Activated CD4-positive, alpha-beta T cell treated with anti-CD3 and anti-CD28 coated beads for 36 hours (primary cell): ENCODE measurements at regions of chr1 and their contacts with region 1.

Region 1: DNA sequence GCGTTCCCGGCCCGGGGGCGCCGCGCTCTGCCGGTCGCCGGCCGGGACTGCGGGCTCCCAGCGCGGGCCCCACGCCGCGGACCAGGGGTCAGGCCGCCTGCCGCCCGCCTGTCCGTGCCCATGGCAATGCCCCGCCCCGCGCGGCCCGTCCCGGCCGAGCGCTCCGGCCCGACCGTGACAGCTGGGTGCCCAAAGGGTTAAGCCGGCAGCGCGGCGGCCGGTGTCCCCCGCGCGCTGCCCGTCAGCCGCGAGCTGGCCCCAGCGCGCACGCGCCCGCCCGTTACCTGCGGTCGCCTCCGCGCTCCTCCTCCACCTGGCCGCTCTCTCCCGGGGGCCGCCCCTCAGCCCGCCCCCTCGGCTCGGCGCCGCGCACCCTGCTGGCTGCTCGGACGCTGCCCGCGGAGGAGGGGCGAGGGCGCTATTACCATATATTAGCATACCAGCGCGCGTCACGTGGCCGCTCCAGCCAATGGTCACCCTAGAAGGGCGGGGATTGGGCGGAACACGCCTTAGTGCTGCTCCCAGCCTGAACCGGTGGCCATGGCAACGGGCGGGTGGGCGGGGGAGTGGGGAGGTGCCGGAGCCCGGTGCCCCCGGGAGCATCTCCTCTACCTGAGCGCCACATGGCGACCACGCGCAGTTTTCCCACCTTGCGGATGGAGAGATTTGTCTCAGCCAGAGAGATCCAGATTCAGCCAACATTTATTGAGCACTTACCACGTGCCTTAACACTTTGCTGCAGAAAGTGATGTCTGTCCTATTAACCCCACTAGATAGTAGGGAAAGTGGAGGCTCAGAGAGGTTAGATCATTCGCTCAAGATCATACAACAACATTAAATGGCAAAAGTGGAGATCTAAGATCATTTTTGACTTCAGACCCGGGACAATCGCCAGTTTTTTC is at the start of gene PHC2:
- DNase-seq: peak; percentile 95
- ATAC-seq: peak; percentile 99
- H3K4me3 Mint-ChIP-seq: peak within 1 kb of the TSS; percentile 58
- H3K27ac Mint-ChIP-seq: no peak within 1 kb of the TSS
- H3K4me1 Mint-ChIP-seq: peaks cover 5% of the 10 kb centered on the region
- H3K27me3 Mint-ChIP-seq: peaks cover 5% of the 10 kb centered on the region
- total RNA-seq, gene PHC2: 23.8 to 28.4 TPM

Region 2: GRCh38 chr1:33181921-33182341 is 249.0 kb before region 1 on chr1 and contains the start of gene TRIM62:
- CTCF ChIA-PET with region 1: no interaction called
- POLR2A ChIA-PET with region 1: no interaction called
- intact Hi-C with region 1: loop called in 1 of 2 experiments (anchors 1 kb)
- DNase-seq: peak; percentile 84
- ATAC-seq: peak; percentile 35
- H3K4me3 Mint-ChIP-seq: peak within 1 kb of the TSS; percentile 79
- H3K27ac Mint-ChIP-seq: peak within 1 kb of the TSS; percentile 74
- H3K4me1 Mint-ChIP-seq: peaks cover 25% of the 10 kb centered on the region
- H3K27me3 Mint-ChIP-seq: peaks cover 5% of the 10 kb centered on the region
- total RNA-seq, gene TRIM62: 3.6 to 3.7 TPM

Region 3: GRCh38 chr1:33256701-33257399 is 174.1 kb before region 1 on chr1:
- CTCF ChIA-PET with region 1: no interaction called
- POLR2A ChIA-PET with region 1: no interaction called
- intact Hi-C with region 1: loop called in 1 of 2 experiments (anchors 1 kb)
- DNase-seq: peak; percentile 72
- ATAC-seq: peak; percentile 50
- H3K4me3 Mint-ChIP-seq: peak overlapping the region; percentile 95
- H3K27ac Mint-ChIP-seq: peak overlapping the region; percentile 98
- H3K4me1 Mint-ChIP-seq: peaks cover 39% of the 10 kb centered on the region
- H3K27me3 Mint-ChIP-seq: no peaks in the 10 kb centered on the region

Region 4: DNA sequence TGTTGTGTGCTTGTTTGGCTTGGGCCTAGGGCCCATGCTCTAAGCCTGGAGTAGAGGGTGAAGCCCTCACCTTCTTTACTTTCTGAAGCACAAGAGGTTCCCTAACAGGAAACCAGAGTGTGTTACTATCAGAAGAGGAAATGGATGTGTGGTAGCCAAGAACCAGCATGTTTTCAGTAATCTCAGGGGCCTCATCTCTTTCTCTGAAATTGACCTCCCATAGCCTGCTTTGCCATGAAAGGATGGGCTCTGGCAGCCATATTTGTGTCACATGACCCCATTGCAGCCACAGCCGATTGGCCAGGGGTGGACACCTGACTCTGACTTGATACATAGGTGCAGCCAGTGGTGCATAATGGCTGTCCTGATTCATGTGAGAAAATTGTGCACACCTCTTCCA is 128.6 kb before region 1 on chr1:
- CTCF ChIA-PET with region 1: no interaction called
- POLR2A ChIA-PET with region 1: no interaction called
- intact Hi-C with region 1: no loop called
- DNase-seq: peak; percentile 58
- ATAC-seq: peak; percentile 53
- H3K4me3 Mint-ChIP-seq: no peak overlapping the region
- H3K27ac Mint-ChIP-seq: no peak overlapping the region
- H3K4me1 Mint-ChIP-seq: peaks cover 7% of the 10 kb centered on the region
- H3K27me3 Mint-ChIP-seq: peaks cover 10% of the 10 kb centered on the region